ENCODE measurements at regions of chr6 and their contacts with region 1.

Region 1: DNA sequence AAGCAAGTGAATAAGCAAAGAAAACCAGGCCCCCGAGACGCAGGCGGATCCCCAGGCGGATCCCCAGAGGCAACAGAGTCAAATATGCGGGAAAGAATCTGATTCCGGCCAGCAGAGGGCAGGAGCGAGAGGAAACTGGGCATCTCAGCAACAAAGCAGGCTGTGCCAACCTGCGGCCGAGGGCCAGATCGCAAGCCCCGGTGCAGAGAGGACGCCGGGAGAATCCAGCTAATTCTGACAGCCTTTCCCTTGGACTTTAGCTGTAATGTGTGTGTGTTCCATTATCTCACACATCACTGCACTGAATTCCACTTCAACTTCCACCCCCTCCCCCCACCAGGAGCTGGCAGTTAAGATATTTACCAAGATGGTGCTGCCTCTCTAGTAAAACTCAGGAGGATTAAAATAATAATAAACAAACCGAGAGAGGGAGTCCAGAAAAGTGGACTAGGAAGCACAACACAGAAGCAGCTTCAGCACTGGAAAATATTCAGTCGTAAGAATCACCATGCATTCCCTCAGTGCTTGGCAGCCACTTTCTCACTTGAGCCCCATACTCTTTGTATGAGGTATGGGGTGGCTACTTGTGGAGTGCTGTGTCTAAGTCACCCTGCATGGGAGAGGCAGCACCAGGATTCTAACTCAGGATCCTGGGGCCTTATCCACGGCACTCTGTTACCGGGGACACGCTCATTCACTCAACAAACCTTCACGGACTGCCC is 66.2 kb upstream of the SNX9 start:
- DNase-seq: peak; percentile 79 to 98 (median 93)

Region 2: GRCh38 chr6:157823001-157823527 is 66.2 kb after region 1 on chr6 and contains the start of gene SNX9:
- intact Hi-C with region 1: loop called (anchors 5 kb)
- DNase-seq: peak; percentile 18 to 89 (median 78)

Region 3: GRCh38 chr6:157898169-157898568 is 141.3 kb after region 1 on chr6:
- intact Hi-C with region 1: loop called (anchors 10 kb)
- DNase-seq: peak; percentile 45 to 89 (median 73)

Region 4: DNA sequence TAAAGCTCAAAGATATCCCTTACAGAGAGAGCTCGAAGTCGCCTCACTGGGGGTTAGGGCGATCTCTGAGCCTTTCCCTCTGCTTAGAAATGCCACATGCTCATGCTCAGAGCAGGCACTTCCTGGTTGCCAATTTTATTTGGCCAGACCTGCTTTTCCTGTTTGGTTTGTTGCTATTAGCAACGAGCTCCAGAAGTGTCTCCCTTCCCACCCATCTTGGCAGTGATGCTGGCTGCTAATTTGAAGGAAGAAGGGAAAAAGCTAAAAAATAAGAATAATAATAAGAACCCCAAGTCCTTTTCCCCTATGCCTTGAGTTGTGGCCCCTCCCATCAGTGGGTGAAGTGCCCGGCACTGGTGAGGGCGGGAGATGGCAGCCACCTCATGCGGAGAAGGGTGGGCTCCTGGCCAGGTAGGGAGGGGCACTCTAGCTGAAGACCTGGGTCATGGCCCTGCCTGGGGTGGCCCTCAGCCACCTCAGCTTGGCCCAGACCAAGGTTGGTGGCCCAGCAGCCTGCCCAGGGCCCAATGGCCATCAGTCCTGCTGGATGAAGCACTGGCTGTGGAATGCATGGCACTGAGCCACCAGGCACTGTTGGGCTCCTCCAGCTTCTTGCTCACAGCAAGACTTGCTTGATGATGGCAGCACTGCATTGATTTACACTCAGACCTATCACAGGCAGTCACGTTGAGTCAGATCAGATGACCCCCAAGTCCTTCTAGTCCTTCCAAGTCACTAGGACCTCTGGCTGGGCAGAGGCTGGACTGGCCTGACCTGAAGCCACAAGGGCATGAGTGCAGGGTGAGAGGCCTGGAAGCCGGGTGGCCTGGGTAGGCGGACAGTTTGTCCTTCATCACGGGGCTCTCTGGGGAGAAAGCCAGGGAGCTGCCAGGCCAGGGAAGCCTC is 303.8 kb after region 1 on chr6:
- intact Hi-C with region 1: loop called (anchors 10 kb)
- DNase-seq: peak in 31 of 42 donors; percentile 32 to 79 (median 54)

Measured in head of caudate nucleus (tissue), 42 donors.